ENCODE measurements at regions of chr3 and their contacts with region 1.

Region 1: DNA sequence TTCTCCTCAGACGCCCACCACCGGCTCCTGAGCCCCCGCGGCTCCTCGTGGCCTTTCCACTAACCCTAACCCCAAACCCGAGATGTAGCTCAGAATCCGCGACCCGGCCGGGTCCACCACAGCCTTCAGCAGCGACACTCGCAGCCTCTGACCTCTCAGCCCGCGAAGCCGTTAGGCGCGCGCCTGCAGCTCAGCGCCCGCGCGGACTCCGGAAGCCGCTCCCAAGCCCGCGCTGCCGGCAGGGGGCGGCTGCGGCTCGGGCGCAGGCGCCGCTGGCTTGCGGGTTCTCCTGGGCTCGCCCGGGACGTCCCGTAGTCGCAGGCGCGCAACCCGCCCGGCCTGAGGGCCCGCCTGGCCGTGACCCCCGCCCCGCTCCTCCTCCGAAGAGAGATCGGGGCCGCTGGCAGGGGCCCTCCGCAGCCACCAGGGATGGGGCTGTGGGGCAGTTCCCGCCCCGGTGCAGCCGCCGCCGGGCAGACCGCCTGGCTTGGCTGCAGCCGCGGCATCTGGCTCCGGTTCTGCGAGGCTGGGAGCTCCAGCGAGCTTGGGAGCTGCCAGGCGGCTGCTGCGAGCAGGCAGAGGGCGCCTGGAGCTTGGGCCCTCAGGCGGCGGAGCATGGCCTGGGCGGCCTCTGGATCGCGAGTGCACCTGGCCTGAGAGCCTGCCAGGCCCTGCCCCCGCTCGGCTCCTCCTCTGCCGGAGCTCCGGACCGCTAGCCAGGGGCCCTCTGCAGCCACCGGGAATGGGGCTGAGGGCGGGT is 120.7 kb downstream of the LMLN start:
- DNase-seq: peak; percentile 72
- H3K4me3 Mint-ChIP-seq: peak overlapping the region; percentile 72
- H3K27ac Mint-ChIP-seq: peak overlapping the region; percentile 54
- H3K4me1 Mint-ChIP-seq: peaks cover 5% of the 10 kb centered on the region
- H3K27me3 Mint-ChIP-seq: peaks cover 58% of the 10 kb centered on the region

Region 2: GRCh38 chr3:197899833-197900478 is 180.7 kb before region 1 on chr3:
- CTCF ChIA-PET with region 1: no interaction called
- POLR2A ChIA-PET with region 1: no interaction called
- DNase-seq: no peak
- H3K4me3 Mint-ChIP-seq: no peak overlapping the region
- H3K27ac Mint-ChIP-seq: no peak overlapping the region
- H3K4me1 Mint-ChIP-seq: no peaks in the 10 kb centered on the region
- H3K27me3 Mint-ChIP-seq: no peaks in the 10 kb centered on the region

Region 3: DNA sequence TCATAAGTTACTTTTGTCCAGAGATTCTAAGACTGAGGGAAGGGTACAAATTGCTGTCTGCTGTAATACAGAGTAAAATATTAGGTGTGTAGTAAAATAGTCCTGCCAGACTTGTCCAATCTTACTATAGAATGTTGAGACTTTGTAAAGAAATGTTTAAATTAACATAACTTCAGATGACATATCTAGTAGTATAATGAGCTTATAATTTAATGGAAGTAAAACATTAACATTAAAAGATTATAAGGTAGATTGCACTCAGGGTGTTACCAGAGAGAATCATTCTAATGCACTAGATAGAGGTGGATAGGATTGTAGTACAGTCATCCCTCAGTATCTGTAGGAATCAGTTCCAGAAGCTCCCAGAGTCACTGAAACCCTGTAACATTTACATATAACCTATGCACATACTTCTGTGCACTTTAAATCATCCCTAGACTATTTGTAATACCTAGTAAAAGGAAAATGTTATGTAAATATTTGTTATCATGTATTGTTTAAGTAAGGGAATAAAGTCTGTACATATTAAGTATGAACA is 10.2 kb after region 1 on chr3:
- CTCF ChIA-PET with region 1: interaction called, 12 read pairs
- POLR2A ChIA-PET with region 1: no interaction called
- DNase-seq: no peak
- H3K4me3 Mint-ChIP-seq: no peak overlapping the region
- H3K27ac Mint-ChIP-seq: no peak overlapping the region
- H3K4me1 Mint-ChIP-seq: no peaks in the 10 kb centered on the region
- H3K27me3 Mint-ChIP-seq: peaks cover 51% of the 10 kb centered on the region

Measured in activated CD4-positive, alpha-beta T cell treated with anti-CD3 and anti-CD28 coated beads, Interleukin-2, amount 10 ng/mL, durations not matched to agents 7 days and 5 days (primary cell).